CD4-positive, alpha-beta memory T cell (primary cell): ENCODE measurements at regions of chr16 and their contacts with region 1.

Region 1: GRCh38 chr16:674968-675883 is at the start of gene RHBDL1:
- DNase-seq: no peak
- H3K4me3 ChIP-seq: peak within 1 kb of the TSS in 1 of 2 donors; percentile 24
- H3K4me3 Mint-ChIP-seq: peak within 1 kb of the TSS in 5 of 8 donors; percentile 29 to 72 (median 48)
- H3K27ac ChIP-seq: no peak within 1 kb of the TSS
- H3K27ac Mint-ChIP-seq: peak within 1 kb of the TSS in 2 of 7 donors; percentile 42 to 88
- H3K4me1 ChIP-seq: peaks cover 19% of the 10 kb centered on the region
- H3K4me1 Mint-ChIP-seq: peaks cover 5 to 30% (median 18%) of the 10 kb centered on the region in 4 donors
- H3K27me3 ChIP-seq: no peaks in the 10 kb centered on the region
- H3K27me3 Mint-ChIP-seq: no peaks in the 10 kb centered on the region
- total RNA-seq, gene RHBDL1: 2.2 to 2.4 TPM

Region 2: GRCh38 chr16:610513-611334 is 64.5 kb before region 1 on chr16:
- CTCF ChIA-PET with region 1: no interaction called
- POLR2A ChIA-PET with region 1: no interaction called
- intact Hi-C with region 1: no loop called
- DNase-seq: peak; percentile 44 to 57 (median 51)
- H3K4me3 ChIP-seq: no peak overlapping the region
- H3K4me3 Mint-ChIP-seq: no peak overlapping the region
- H3K27ac ChIP-seq: no peak overlapping the region
- H3K27ac Mint-ChIP-seq: peak overlapping the region in 3 of 7 donors; percentile 8 to 22 (median 19)
- H3K4me1 ChIP-seq: no peaks in the 10 kb centered on the region
- H3K4me1 Mint-ChIP-seq: peaks cover 3 to 17% (median 9%) of the 10 kb centered on the region in 4 donors
- H3K27me3 ChIP-seq: no peaks in the 10 kb centered on the region
- H3K27me3 Mint-ChIP-seq: no peaks in the 10 kb centered on the region

Region 3: DNA sequence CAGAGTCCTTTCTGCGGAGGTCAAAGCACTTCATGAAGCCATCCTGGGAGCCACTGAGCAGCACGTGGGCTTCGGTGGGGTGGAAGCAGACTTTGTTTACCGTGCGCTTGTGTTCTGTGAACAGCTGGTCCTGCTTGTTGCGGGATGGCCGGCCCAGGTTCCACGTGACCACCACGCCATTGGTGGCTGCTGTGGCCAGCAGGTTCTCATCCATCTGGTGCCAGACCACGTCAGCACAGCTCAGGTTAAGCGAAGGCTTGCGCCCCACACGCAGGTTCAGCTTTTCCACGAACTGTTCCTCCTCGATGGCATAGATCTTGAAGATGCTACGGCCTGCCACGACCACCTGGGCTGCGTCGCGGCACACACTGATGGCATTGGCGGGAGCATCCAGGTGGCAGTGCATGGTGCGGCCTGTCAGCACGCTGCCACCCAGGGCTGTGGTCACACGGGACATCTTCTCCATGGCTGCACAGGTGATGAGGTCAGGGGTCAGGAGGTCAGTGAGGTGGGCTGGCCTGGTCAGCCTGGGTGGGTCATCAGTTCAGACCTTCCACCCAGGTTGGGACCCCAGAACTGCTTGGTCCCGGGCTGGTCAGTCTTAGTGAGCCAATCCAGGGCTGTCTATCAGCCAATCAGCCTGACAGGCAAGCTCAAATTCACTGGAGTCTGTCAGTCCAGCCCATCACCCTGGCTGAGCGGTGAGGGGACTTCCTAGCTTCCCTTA is 14.1 kb after region 1 on chr16:
- CTCF ChIA-PET with region 1: interaction called, 4 read pairs
- POLR2A ChIA-PET with region 1: interaction called, 212 read pairs
- intact Hi-C with region 1: no loop called
- DNase-seq: no peak
- H3K4me3 ChIP-seq: peak overlapping the region; percentile 70 to 93
- H3K4me3 Mint-ChIP-seq: peak overlapping the region; percentile 89 to 94 (median 90)
- H3K27ac ChIP-seq: peak overlapping the region; percentile 64
- H3K27ac Mint-ChIP-seq: peak overlapping the region; percentile 88 to 93 (median 92)
- H3K4me1 ChIP-seq: peaks cover 38% of the 10 kb centered on the region
- H3K4me1 Mint-ChIP-seq: peaks cover 10 to 41% (median 27%) of the 10 kb centered on the region in 4 donors
- H3K27me3 ChIP-seq: no peaks in the 10 kb centered on the region
- H3K27me3 Mint-ChIP-seq: no peaks in the 10 kb centered on the region

Region 4: DNA sequence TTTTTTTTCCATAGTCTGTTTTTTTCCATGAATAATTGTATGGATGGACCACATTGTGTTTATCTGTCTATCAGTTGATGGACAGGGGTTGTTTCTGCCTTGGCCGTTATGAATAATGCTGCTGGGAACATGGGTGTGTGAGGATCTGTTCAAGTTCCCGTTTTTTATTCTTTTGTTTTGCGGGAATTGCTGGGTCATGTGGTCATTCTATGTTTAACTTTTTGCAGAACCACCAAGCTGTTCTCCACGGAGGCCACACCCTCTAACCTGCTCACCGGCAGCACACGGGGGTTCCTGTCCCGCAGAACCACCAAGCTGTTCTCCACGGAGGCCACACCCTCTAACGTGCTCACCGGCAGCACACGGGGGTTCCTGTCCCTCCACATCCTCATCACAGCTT is 79.4 kb after region 1 on chr16:
- CTCF ChIA-PET with region 1: no interaction called
- POLR2A ChIA-PET with region 1: no interaction called
- intact Hi-C with region 1: no loop called
- DNase-seq: no peak
- H3K4me3 ChIP-seq: no peak overlapping the region
- H3K4me3 Mint-ChIP-seq: no peak overlapping the region
- H3K27ac ChIP-seq: no peak overlapping the region
- H3K27ac Mint-ChIP-seq: no peak overlapping the region
- H3K4me1 ChIP-seq: no peaks in the 10 kb centered on the region
- H3K4me1 Mint-ChIP-seq: peaks cover 0 to 2% (median under 1%) of the 10 kb centered on the region in 4 donors
- H3K27me3 ChIP-seq: no peaks in the 10 kb centered on the region
- H3K27me3 Mint-ChIP-seq: peaks cover 6 to 7% of the 10 kb centered on the region in 2 donors